Activated T-helper 2 cell treated with anti-CD3 and anti-CD28 coated beads, Interferon-gamma antibody, Interleukin-2, Interleukin-4, amounts not matched to agents 10 μg/mL and 5 μg/mL and 100 μg/mL, durations not matched to agents 14 hours and 24 hours and 36 hours (primary cell): ENCODE measurements at regions of chr19 and their contacts with region 1.

Region 1: DNA sequence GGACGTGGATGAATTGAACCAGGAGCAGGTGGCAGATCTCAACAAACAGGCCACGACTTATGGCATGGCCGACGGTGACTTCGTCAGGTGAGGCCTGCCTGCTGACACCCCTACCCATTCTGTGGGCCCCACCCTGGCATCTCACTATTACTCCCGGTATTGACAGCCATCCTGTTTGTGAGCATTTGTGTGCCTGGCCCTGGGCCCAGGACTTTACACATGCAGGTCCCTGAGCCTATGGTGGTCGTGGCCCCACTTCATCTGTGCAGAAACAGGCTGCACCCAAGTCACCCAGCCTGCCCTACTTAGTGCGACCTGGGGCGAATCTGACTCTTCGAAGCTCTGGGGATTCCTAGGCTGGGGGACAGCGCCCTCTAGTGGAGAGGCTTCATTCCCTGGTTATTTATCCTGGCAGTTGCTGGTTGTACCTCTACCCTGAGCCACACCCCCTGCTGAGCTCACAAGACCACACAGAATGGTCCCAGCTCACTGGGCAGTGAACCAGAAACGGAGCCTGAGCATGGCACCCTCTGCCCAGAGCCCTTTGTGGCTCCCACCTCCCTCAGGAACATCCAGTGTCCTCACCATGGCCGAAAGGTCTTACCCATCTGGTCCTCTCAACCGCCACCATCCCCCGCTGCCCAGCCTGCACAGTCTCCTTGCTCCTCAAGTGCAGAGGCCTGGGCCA is 16.9 kb downstream of the ZNF296 start:
- DNase-seq: peak; percentile 70
- H3K4me3 Mint-ChIP-seq: no peak overlapping the region
- H3K27ac Mint-ChIP-seq: peak overlapping the region; percentile 59
- H3K4me1 Mint-ChIP-seq: peaks cover 2% of the 10 kb centered on the region
- H3K27me3 Mint-ChIP-seq: no peaks in the 10 kb centered on the region

Region 2: GRCh38 chr19:44988896-44989556 is 70.4 kb before region 1 on chr19:
- intact Hi-C with region 1: loop called (anchors 1 kb)
- DNase-seq: peak; percentile 42
- H3K4me3 Mint-ChIP-seq: no peak overlapping the region
- H3K27ac Mint-ChIP-seq: no peak overlapping the region
- H3K4me1 Mint-ChIP-seq: no peaks in the 10 kb centered on the region
- H3K27me3 Mint-ChIP-seq: no peaks in the 10 kb centered on the region